ENCODE measurements at regions of chr15 and their contacts with region 1.

Region 1: GRCh38 chr15:72722071-72722696 is 36.2 kb downstream of the BBS4 start:
- DNase-seq: peak; percentile 64 to 80 (median 70)
- H3K4me3 ChIP-seq: no peak overlapping the region
- H3K27ac ChIP-seq: no peak overlapping the region
- H3K4me1 ChIP-seq: no peaks in the 10 kb centered on the region
- H3K27me3 ChIP-seq: no peaks in the 10 kb centered on the region

Region 2: DNA sequence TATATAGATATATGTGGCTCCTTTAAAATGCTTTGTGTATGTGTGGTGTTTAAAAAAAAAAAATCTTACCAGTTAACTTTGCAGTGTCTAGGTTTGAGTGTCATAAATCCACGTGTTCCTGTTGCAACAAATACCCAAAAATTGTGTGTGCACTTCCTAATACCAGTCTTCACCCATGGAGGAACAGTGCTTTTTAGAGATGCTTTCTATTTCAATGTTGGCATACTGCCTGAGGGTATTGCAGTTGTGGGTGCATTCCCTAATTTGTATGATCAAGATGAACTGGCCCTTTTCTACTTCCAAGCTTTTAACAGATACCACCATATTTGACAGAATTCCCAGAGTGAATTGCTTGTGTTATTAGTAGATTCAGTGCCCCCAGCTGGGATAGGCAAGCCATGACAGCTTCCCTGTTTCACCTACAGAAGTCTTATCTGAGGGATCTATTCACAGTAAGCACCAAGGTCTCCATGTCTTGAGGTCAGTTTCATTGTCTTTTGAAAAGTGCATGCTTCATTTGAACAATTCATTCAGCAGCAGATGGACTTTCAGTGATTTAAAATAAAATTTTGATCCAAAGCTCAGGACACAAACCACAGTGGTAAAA is 136.6 kb before region 1 on chr15:
- CTCF ChIA-PET with region 1: no interaction called
- POLR2A ChIA-PET with region 1: no interaction called
- DNase-seq: no peak
- H3K4me3 ChIP-seq: no peak overlapping the region
- H3K27ac ChIP-seq: no peak overlapping the region
- H3K4me1 ChIP-seq: no peaks in the 10 kb centered on the region
- H3K27me3 ChIP-seq: no peaks in the 10 kb centered on the region

Region 3: GRCh38 chr15:72685925-72686794 is 36.0 kb before region 1 on chr15 and contains the starts of genes BBS4 and HIGD2B:
- CTCF ChIA-PET with region 1: no interaction called
- POLR2A ChIA-PET with region 1: no interaction called
- DNase-seq: peak; percentile 86 to 95 (median 93)
- H3K4me3 ChIP-seq: peak within 1 kb of the TSS; percentile 67 to 91 (median 87)
- H3K27ac ChIP-seq: peak within 1 kb of the TSS in 1 of 2 experiments; percentile 76
- H3K4me1 ChIP-seq: peaks cover 4 to 13% (median 7%) of the 10 kb centered on the region in 4 experiments
- H3K27me3 ChIP-seq: no peaks in the 10 kb centered on the region

Region 4: DNA sequence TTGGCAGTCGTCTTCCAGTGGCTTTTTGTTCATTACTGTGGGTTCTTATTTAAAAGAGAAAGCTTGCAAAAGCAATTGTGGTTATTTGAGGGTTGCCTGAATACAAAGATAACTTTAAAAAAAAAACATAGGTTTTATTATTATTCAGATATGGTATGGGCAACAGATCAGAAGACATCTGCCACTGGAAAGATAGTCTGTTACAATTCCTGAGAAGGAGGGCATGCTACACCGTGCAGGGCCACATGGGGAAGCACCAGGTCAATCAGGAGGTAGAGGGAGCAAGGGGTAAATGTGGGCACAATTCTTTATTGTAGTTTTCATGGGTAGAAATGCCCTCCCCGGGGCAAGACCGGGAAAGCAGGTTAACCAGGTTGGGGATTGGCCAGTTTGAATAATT is 10.3 kb after region 1 on chr15:
- CTCF ChIA-PET with region 1: interaction called, 65 read pairs
- POLR2A ChIA-PET with region 1: no interaction called
- DNase-seq: peak; percentile 14 to 54 (median 32)
- H3K4me3 ChIP-seq: no peak overlapping the region
- H3K27ac ChIP-seq: no peak overlapping the region
- H3K4me1 ChIP-seq: no peaks in the 10 kb centered on the region
- H3K27me3 ChIP-seq: no peaks in the 10 kb centered on the region

Region 5: GRCh38 chr15:72835294-72835890 is 113.2 kb after region 1 on chr15:
- CTCF ChIA-PET with region 1: no interaction called
- POLR2A ChIA-PET with region 1: no interaction called
- DNase-seq: no peak
- H3K4me3 ChIP-seq: no peak overlapping the region
- H3K27ac ChIP-seq: no peak overlapping the region
- H3K4me1 ChIP-seq: no peaks in the 10 kb centered on the region
- H3K27me3 ChIP-seq: peaks cover 0 to 9% (median 7%) of the 10 kb centered on the region in 5 experiments